ENCODE measurements at regions of chr9 and their contacts with region 1.

Region 1: DNA sequence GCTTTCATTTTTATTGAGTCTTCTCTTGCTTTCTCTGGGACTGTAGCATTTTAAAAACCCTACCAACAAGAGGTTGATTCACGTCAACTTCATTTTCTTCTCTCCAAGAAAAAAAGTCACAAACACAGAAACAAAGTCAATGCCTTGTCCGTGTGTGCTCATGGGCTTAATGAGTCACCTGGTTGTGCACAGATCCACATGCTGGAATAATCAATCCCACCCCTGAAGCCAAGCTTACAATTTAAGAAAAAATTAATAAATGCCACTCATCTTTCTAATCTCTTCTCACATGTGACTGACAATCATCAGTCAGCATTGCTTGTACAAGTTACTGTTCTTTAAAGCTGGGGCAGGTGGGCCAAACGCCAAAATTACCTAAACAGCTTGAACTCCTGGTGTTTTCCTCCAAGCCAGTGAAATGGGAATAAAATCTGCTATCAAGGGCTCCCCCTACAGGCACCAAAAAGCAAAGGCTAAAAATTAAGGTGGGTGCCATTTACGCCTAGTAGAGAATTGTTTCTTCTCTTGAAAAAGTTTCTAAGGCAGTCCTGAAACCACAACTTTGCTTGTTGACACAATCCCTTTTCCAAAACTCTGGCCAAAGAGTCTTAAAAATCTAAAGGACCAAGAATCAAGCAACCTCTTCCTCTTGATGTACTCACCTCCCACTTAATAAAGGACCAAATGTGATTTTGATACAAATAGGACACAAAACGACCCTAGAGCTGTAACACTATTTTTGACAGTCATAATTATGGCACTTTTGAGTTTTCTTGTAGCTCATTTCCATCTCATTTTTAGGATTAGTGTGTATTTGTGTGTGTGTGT is 21.3 kb downstream of the TRMO start:
- DNase-seq: no peak
- ATAC-seq: peak; percentile 81
- H3K4me3 ChIP-seq: no peak overlapping the region
- H3K27ac ChIP-seq: no peak overlapping the region
- H3K4me1 ChIP-seq: peaks cover 6% of the 10 kb centered on the region
- H3K27me3 ChIP-seq: no peaks in the 10 kb centered on the region
- CTCF ChIP-seq: peak; percentile 74

Region 2: GRCh38 chr9:97688654-97689053 is 212.3 kb before region 1 on chr9:
- intact Hi-C with region 1: no loop called
- DNase-seq: no peak
- ATAC-seq: peak; percentile 15
- H3K4me3 ChIP-seq: no peak overlapping the region
- H3K27ac ChIP-seq: no peak overlapping the region
- H3K4me1 ChIP-seq: peaks cover 3% of the 10 kb centered on the region
- H3K27me3 ChIP-seq: no peaks in the 10 kb centered on the region
- CTCF ChIP-seq: no peak

Region 3: GRCh38 chr9:97703437-97704344 is 197.3 kb before region 1 on chr9:
- intact Hi-C with region 1: loop called (anchors 10 kb)
- DNase-seq: no peak
- ATAC-seq: no peak
- H3K4me3 ChIP-seq: no peak overlapping the region
- H3K27ac ChIP-seq: no peak overlapping the region
- H3K4me1 ChIP-seq: no peaks in the 10 kb centered on the region
- H3K27me3 ChIP-seq: no peaks in the 10 kb centered on the region
- CTCF ChIP-seq: no peak

Region 4: GRCh38 chr9:98074115-98074990 is 173.4 kb after region 1 on chr9:
- intact Hi-C with region 1: no loop called
- DNase-seq: peak; percentile 74
- ATAC-seq: peak; percentile 85
- H3K4me3 ChIP-seq: no peak overlapping the region
- H3K27ac ChIP-seq: peak overlapping the region; percentile 51
- H3K4me1 ChIP-seq: peaks cover 21% of the 10 kb centered on the region
- H3K27me3 ChIP-seq: no peaks in the 10 kb centered on the region
- CTCF ChIP-seq: peak; percentile 98